AG04450 (cell line): ENCODE measurements at regions of chr16 and their contacts with region 1.

Region 1: DNA sequence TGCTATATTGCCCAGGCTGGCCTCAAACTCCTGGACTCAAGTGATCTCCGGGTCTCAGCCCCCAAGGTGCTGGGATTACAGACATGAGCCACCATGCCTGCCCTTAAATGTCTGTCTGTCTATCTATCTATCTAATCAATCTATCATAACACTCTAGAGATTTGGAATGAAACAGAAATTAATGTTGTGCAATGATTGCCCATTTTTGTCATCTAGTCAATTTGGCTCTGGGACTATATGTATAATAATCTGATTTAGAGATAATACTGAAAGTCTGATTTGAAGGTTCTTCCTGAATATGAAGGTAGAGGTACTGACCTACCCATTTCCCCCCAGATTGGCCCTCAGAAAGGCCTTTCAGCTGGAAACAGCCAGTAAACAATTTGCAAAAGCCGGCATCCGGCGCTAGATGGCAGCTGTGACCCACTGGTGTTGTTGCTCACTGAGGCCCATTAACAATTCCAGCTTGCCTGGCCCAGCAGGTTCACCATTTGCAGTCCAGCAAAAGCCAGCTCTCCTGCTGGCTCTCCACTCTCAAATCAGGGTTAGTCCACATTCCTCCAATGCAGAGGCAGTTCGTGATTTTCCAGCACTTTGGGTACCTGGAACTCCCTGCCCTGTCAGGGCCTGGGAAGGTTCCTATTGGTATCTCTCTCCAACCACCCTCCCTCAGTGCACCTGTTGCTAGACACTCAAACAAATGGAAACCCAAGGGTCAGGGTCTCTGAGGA is 22.9 kb upstream of the C16orf87 start:
- DNase-seq: peak; percentile 36
- H3K4me3 ChIP-seq: no peak overlapping the region
- H3K27ac ChIP-seq: no peak overlapping the region
- H3K27me3 ChIP-seq: peaks cover 4% of the 10 kb centered on the region
- CTCF ChIP-seq: peak; percentile 93

Region 2: GRCh38 chr16:46715769-46716305 is 138.0 kb before region 1 on chr16:
- CTCF ChIA-PET with region 1: no interaction called
- POLR2A ChIA-PET with region 1: no interaction called
- DNase-seq: no peak
- H3K4me3 ChIP-seq: no peak overlapping the region
- H3K27ac ChIP-seq: no peak overlapping the region
- H3K27me3 ChIP-seq: no peaks in the 10 kb centered on the region
- CTCF ChIP-seq: no peak

Region 3: GRCh38 chr16:46774743-46775177 is 79.1 kb before region 1 on chr16:
- CTCF ChIA-PET with region 1: no interaction called
- POLR2A ChIA-PET with region 1: no interaction called
- DNase-seq: no peak
- H3K4me3 ChIP-seq: no peak overlapping the region
- H3K27ac ChIP-seq: no peak overlapping the region
- H3K27me3 ChIP-seq: no peaks in the 10 kb centered on the region
- CTCF ChIP-seq: no peak

Region 4: DNA sequence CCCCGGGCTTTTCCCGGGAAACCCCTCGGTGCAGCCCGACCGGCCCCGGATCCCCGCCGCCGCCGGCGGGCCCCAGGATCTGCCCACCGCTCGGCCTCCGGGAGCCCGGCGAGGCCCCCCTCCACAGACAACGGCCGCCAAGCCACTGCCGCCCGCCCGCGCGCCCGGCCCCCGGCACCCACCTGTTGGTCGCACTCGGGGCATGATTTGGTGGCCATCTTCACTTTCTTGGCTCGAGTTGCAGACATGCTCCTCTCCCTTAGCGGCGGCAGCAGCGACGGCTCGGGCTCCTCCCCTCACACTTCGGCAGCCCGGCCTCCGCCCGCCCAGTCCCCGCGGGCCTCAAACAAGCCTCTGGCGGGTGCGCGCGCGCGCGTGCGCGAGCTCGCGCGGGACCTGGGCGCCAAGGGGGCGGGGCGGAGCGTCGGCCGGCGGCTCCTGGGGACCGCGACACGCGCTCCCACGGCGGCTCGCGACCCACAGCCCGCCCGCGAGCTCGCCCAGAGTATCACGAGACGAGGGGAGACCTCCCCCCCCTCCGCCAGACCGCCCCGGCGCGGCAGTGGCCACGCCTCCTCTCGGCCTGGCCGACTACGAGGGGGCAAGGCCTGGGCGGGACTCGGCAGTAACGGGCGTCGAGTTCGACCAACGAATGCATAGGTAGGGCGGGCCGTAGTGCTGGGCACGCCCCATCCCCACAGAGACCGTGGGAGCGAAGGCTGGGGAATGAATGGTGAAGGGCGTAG is 22.8 kb before region 1 on chr16 and contains the start of gene C16orf87:
- CTCF ChIA-PET with region 1: interaction called, 12 read pairs
- POLR2A ChIA-PET with region 1: no interaction called
- DNase-seq: peak; percentile 84
- H3K4me3 ChIP-seq: peak within 1 kb of the TSS; percentile 79
- H3K27ac ChIP-seq: peak within 1 kb of the TSS; percentile 40
- H3K27me3 ChIP-seq: no peaks in the 10 kb centered on the region
- CTCF ChIP-seq: no peak
- polyA plus RNA-seq, gene C16orf87: 16.8 and 21.7 TPM in 2 replicates

Region 5: DNA sequence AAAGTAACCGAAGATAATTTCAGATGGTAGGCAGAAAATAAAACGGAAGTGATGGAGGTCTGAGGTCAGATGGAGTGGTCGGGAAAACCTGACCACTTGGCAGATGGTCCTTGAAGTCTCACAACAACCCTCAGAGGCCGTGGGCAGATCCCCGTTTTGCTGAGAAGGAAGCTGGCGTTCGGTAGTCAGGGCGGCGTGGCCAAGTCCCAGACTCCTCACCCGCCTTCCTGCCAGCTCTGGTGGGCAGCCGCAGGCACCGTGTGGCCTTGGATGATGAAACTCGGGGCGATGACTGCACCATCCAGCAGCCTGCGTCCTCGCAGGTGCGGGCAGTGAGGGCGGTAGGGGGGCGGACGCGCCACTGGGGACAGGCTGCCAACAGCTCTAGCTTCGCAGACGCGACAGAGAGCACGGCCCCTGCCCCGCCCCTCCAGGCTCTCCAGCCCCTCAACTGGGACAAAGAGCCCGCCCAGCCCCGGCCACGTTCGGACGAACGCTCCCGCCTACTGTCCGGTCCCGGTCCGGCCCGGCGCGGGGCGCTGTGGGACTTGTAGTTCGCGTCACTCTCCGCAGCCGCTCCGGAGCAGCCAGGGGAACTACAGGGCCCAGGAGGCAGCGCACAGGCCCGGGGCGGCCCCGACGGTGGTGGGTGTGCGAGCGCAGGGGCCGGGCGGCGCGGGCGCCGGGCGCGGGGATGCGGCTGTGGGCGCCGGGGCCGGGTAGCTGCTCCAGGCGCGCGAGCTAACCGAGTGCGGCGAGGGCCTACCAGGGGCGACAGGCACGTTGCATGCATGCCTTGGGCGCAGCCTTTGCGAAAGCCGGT is 30.0 kb after region 1 on chr16 and contains the start of gene GPT2:
- CTCF ChIA-PET with region 1: interaction called, 18 read pairs
- POLR2A ChIA-PET with region 1: no interaction called
- DNase-seq: peak; percentile 84
- H3K4me3 ChIP-seq: peak within 1 kb of the TSS; percentile 92
- H3K27ac ChIP-seq: peak within 1 kb of the TSS; percentile 65
- H3K27me3 ChIP-seq: peaks cover 6% of the 10 kb centered on the region
- CTCF ChIP-seq: no peak
- polyA plus RNA-seq, gene GPT2: 18.5 and 23.0 TPM in 2 replicates

Region 6: GRCh38 chr16:46903255-46903905 is 49.5 kb after region 1 on chr16:
- CTCF ChIA-PET with region 1: interaction called, 187 read pairs
- POLR2A ChIA-PET with region 1: interaction called, 7 read pairs
- DNase-seq: no peak
- H3K4me3 ChIP-seq: no peak overlapping the region
- H3K27ac ChIP-seq: no peak overlapping the region
- H3K27me3 ChIP-seq: no peaks in the 10 kb centered on the region
- CTCF ChIP-seq: no peak

Region 7: GRCh38 chr16:46918861-46919792 is 65.2 kb after region 1 on chr16:
- CTCF ChIA-PET with region 1: interaction called, 32 read pairs
- POLR2A ChIA-PET with region 1: no interaction called
- DNase-seq: no peak
- H3K4me3 ChIP-seq: no peak overlapping the region
- H3K27ac ChIP-seq: no peak overlapping the region
- H3K27me3 ChIP-seq: no peaks in the 10 kb centered on the region
- CTCF ChIP-seq: no peak